ENCODE measurements at regions of chr4 and their contacts with region 1.

Region 1: GRCh38 chr4:147590249-147590920 is 26.8 kb upstream of the TMEM184C start:
- DNase-seq: peak; percentile 45 to 78 (median 48)
- H3K4me3 ChIP-seq: no peak overlapping the region
- H3K27ac ChIP-seq: no peak overlapping the region
- H3K4me1 ChIP-seq: no peaks in the 10 kb centered on the region
- H3K27me3 ChIP-seq: no peaks in the 10 kb centered on the region
- CTCF ChIP-seq: peak; percentile 62 to 80 (median 76)
- POLR2A ChIP-seq: no peak

Region 2: GRCh38 chr4:147160908-147161513 is 429.4 kb before region 1 on chr4:
- intact Hi-C with region 1: loop called in 1 of 2 experiments (anchors 5 kb)
- DNase-seq: peak in 5 of 7 donors; percentile 11 to 59 (median 23)
- H3K4me3 ChIP-seq: no peak overlapping the region
- H3K27ac ChIP-seq: no peak overlapping the region
- H3K4me1 ChIP-seq: no peaks in the 10 kb centered on the region
- H3K27me3 ChIP-seq: peaks cover 3% of the 10 kb centered on the region
- CTCF ChIP-seq: peak; percentile 43 to 65 (median 55)
- POLR2A ChIP-seq: no peak

Region 3: GRCh38 chr4:147518846-147519767 is 71.3 kb before region 1 on chr4:
- intact Hi-C with region 1: loop called (anchors 5 to 10 kb)
- DNase-seq: peak; percentile 51 to 87 (median 73)
- H3K4me3 ChIP-seq: no peak overlapping the region
- H3K27ac ChIP-seq: no peak overlapping the region
- H3K4me1 ChIP-seq: no peaks in the 10 kb centered on the region
- H3K27me3 ChIP-seq: no peaks in the 10 kb centered on the region
- CTCF ChIP-seq: peak; percentile 73 to 88 (median 78)
- POLR2A ChIP-seq: no peak

Region 4: GRCh38 chr4:147524601-147525000 is 65.8 kb before region 1 on chr4:
- intact Hi-C with region 1: loop called (anchors 5 to 10 kb)
- DNase-seq: no peak
- H3K4me3 ChIP-seq: no peak overlapping the region
- H3K27ac ChIP-seq: no peak overlapping the region
- H3K4me1 ChIP-seq: peaks cover 0 to 6% of the 10 kb centered on the region in 2 donors
- H3K27me3 ChIP-seq: no peaks in the 10 kb centered on the region
- CTCF ChIP-seq: no peak
- POLR2A ChIP-seq: no peak

Measured in adrenal gland (tissue), 19 donors.